ENCODE measurements at regions of chr1 and their contacts with region 1.

Region 1: DNA sequence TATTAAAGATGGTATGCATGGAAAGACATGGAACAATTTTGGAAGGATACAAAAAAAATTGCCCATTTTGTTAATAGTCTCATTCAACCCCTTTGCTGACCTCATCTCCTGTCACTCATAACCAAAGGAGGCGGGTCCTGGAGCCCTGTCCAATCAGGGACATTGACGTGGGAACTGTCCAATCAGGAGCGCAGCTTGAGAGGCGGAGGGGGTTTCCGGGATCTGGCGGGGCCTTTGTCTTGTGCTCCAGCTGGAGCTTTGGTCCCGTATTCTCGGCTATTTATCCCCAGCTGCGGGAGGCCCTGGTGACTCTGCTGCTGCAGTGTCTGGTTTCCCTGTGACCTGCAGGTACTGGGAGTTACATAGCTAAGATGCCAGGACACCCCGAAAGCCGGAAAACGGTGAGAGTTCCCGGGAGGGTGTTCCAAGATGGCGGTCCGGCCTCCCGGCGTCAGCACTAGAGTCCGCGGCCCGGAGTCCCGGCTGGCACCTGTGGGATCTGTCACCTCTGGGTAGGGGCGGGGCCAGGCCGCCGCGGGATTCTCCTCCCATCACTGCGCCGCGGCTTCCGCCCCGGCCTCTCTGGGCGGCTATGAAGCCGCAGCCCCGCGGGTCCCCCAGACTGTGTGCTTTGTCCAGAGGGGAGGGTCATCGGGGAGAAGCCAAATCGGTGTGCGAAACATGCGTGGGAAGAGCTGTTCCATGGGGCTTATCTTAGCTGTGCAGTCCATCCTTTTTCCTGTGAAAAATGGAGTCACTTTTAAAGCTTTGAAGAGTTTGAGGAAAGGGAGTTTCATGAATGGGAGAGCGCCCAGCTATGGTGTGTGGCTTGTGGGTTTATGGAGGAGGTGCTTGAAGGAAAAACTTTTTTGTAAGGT is at the start of gene ZNF678:
- DNase-seq: peak; percentile 94
- H3K4me3 ChIP-seq: peak within 1 kb of the TSS; percentile 50
- H3K27ac ChIP-seq: peak within 1 kb of the TSS; percentile 83
- H3K4me1 ChIP-seq: no peaks in the 10 kb centered on the region
- H3K27me3 ChIP-seq: peaks cover 4% of the 10 kb centered on the region
- CTCF ChIP-seq: no peak
- total RNA-seq, gene ZNF678: 7.4 to 10.4 TPM

Region 2: GRCh38 chr1:227388214-227389173 is 175.1 kb before region 1 on chr1:
- intact Hi-C with region 1: no loop called
- DNase-seq: no peak
- H3K4me3 ChIP-seq: no peak overlapping the region
- H3K27ac ChIP-seq: no peak overlapping the region
- H3K4me1 ChIP-seq: no peaks in the 10 kb centered on the region
- H3K27me3 ChIP-seq: no peaks in the 10 kb centered on the region
- CTCF ChIP-seq: no peak

Region 3: GRCh38 chr1:227521782-227522181 is 41.8 kb before region 1 on chr1:
- intact Hi-C with region 1: no loop called
- DNase-seq: no peak
- H3K4me3 ChIP-seq: no peak overlapping the region
- H3K27ac ChIP-seq: no peak overlapping the region
- H3K4me1 ChIP-seq: no peaks in the 10 kb centered on the region
- H3K27me3 ChIP-seq: no peaks in the 10 kb centered on the region
- CTCF ChIP-seq: no peak

Region 4: GRCh38 chr1:227612658-227613057 is 49.1 kb after region 1 on chr1:
- intact Hi-C with region 1: no loop called
- DNase-seq: no peak
- H3K4me3 ChIP-seq: no peak overlapping the region
- H3K27ac ChIP-seq: no peak overlapping the region
- H3K4me1 ChIP-seq: no peaks in the 10 kb centered on the region
- H3K27me3 ChIP-seq: no peaks in the 10 kb centered on the region
- CTCF ChIP-seq: no peak

Region 5: GRCh38 chr1:227734856-227735538 is 171.4 kb after region 1 on chr1 and contains the starts of genes JMJD4 and SNAP47:
- intact Hi-C with region 1: loop called (anchors 10 kb)
- DNase-seq: peak; percentile 91
- H3K4me3 ChIP-seq: peak within 1 kb of the TSS; percentile 84
- H3K27ac ChIP-seq: peak within 1 kb of the TSS; percentile 33
- H3K4me1 ChIP-seq: peaks cover 11% of the 10 kb centered on the region
- H3K27me3 ChIP-seq: no peaks in the 10 kb centered on the region
- CTCF ChIP-seq: no peak
- total RNA-seq, gene JMJD4: 9.0 to 16.0 TPM
- total RNA-seq, gene SNAP47: 19.0 to 28.0 TPM